ENCODE measurements at regions of chr17 and their contacts with region 1.

Region 1: DNA sequence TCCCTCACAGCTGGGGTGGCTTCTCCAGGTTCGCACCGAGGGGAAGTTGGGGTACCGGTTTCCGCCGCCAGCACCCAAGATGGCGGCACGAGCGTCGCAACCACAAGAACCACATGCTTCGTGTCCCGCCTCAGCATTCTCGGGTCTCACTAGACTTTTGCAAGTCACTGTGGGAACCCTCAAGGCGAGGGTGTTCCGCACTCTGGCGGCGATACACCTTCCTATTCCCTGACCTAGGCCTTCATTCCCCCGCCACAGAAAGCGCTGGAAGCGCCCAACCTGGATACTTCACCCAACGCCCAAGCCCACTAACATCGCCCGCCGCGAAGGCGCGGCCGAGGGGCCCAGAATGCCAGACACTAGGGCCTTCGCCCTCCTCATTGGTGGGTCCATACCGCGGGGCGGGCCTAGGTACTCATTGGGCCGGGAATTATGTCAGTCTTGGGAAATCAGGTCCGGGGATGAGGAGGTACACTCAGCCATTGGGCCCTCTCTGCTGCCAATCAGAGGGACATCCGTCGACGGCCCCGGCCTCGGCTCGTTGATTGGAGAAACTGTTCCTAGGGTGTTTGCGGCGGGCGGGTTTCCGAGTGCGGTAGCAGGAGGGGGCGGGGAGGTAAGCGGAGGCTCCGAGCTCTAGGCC is at the start of gene NFE2L1:
- DNase-seq: peak; percentile 100
- ATAC-seq: peak; percentile 91
- H3K4me3 ChIP-seq: peak within 1 kb of the TSS; percentile 64 to 67
- H3K27ac ChIP-seq: peak within 1 kb of the TSS; percentile 90
- H3K4me1 ChIP-seq: peaks cover 25 to 52% of the 10 kb centered on the region in 2 experiments
- H3K27me3 ChIP-seq: no peaks in the 10 kb centered on the region
- CTCF ChIP-seq: no peak
- POLR2A ChIP-seq: peak; percentile 71
- RAD21 ChIP-seq: no peak
- total RNA-seq, gene NFE2L1: 135 TPM

Region 2: DNA sequence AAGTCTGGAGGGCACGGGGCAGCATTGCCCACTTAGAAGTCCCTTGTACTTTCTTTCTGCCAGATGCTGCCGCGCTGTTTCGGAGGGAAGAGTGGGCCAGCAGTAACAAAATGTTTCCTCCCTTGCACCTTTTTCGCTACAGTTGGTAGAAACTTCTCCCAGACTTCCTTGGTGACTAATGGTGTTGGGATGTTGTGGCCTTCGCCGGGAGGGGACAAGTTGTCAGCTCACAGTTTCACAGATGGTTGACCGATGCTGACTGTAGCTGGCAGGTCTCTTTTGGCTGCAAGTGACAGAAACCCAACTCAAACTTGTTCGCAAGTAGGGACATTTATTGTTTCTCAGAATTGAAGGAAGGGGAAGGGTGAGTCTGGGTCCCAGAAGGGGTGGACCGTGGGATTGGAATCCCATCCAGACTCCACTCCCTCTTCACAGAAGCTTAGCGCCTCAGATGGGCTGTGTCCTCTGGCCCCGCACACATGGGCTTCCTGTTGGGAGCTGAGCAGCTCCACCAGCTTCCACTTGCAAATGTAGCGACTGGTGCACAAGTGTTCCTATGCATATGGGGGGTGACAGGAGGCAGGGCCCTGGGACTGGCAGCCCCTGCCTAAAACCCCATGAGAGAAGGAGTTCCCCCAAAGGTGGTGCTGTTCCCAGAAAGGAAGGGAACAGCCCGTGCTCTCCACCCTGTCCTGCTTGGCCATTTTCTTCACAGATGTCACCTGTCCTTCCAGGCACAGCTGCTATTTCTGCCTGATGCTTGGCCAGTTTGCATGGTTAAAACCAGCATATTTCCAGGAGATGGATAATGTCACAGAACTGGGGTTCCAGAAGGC is 1037.9 kb before region 1 on chr17:
- CTCF ChIA-PET with region 1: no interaction called
- POLR2A ChIA-PET with region 1: no interaction called
- RAD21 ChIA-PET with region 1: no interaction called
- intact Hi-C with region 1: no loop called
- DNase-seq: no peak
- ATAC-seq: no peak
- H3K4me3 ChIP-seq: no peak overlapping the region
- H3K27ac ChIP-seq: no peak overlapping the region
- H3K4me1 ChIP-seq: peaks cover 0 to 8% of the 10 kb centered on the region in 2 experiments; a peak in 2 of 4 replicates
- H3K27me3 ChIP-seq: no peaks in the 10 kb centered on the region
- CTCF ChIP-seq: no peak
- POLR2A ChIP-seq: no peak
- RAD21 ChIP-seq: no peak

Region 3: DNA sequence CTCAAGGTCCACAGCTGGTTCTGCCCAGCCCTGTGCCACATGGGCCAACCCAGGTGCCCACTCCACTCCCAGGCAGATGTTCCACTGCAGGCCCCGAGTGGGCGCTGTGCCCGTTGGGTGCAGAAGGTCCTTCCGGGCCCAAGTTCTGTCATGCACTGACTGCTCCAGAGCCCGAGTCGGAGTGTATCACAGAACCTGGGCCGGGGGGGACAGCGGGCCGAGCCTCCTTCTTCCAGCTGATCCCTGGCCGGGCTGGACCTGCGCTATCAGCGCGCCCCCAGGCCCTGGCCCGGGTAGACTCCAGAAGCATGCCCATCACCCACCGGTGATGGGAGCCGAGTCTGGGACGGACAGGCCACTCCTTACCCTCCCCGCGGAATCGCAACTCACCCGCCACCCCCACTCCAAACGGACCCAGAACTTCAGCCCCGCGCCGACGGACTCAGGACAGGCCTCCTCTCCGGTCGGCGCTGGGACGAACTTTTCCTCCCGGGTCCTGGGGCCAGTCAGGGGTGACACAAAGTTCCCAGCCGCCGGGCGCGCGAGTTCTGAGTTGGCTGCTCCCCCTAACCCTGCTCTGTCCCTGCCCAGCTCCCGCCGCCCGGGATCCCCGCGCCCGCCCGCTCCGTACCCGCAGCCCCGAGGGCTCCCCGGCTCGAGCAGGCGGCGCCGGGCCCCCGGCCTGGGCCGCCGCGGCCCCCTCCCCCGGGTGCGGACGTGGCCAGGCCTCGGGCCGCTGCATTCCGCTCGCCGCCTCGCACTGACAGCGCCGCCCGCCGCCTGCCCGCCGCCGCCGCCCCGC is 10.6 kb before region 1 on chr17 and contains the start of gene COPZ2:
- CTCF ChIA-PET with region 1: no interaction called
- POLR2A ChIA-PET with region 1: interaction called, 17 read pairs
- RAD21 ChIA-PET with region 1: no interaction called
- intact Hi-C with region 1: no loop called
- DNase-seq: no peak
- ATAC-seq: peak; percentile 25; the same call in 1 of the 2 replicates
- H3K4me3 ChIP-seq: no peak within 1 kb of the TSS
- H3K27ac ChIP-seq: no peak within 1 kb of the TSS
- H3K4me1 ChIP-seq: no peaks in the 10 kb centered on the region
- H3K27me3 ChIP-seq: no peaks in the 10 kb centered on the region
- CTCF ChIP-seq: no peak
- POLR2A ChIP-seq: no peak
- RAD21 ChIP-seq: no peak
- total RNA-seq, gene COPZ2: not detected

Region 4: GRCh38 chr17:48084932-48085444 is 37.1 kb after region 1 on chr17:
- CTCF ChIA-PET with region 1: interaction called, 10 read pairs
- POLR2A ChIA-PET with region 1: interaction called, 13 read pairs
- RAD21 ChIA-PET with region 1: no interaction called
- intact Hi-C with region 1: no loop called
- DNase-seq: no peak
- ATAC-seq: no peak
- H3K4me3 ChIP-seq: no peak overlapping the region
- H3K27ac ChIP-seq: no peak overlapping the region
- H3K4me1 ChIP-seq: peaks cover 3 to 7% of the 10 kb centered on the region in 2 experiments; a peak in 2 of 4 replicates
- H3K27me3 ChIP-seq: no peaks in the 10 kb centered on the region
- CTCF ChIP-seq: no peak
- POLR2A ChIP-seq: no peak
- RAD21 ChIP-seq: no peak

Region 5: GRCh38 chr17:48107168-48108132 is 59.6 kb after region 1 on chr17 and contains the start of gene SNX11:
- CTCF ChIA-PET with region 1: no interaction called
- POLR2A ChIA-PET with region 1: interaction called, 14 read pairs
- RAD21 ChIA-PET with region 1: no interaction called
- intact Hi-C with region 1: no loop called
- DNase-seq: peak; percentile 85
- ATAC-seq: peak; percentile 96
- H3K4me3 ChIP-seq: peak within 1 kb of the TSS; percentile 82 to 94
- H3K27ac ChIP-seq: peak within 1 kb of the TSS; percentile 93
- H3K4me1 ChIP-seq: peaks cover 0 to 15% of the 10 kb centered on the region in 2 experiments; a peak in 2 of 4 replicates
- H3K27me3 ChIP-seq: no peaks in the 10 kb centered on the region
- CTCF ChIP-seq: 0 out of 6 replicates have a peak, but pooled peaks of 2 of the 3 experiments have one; percentile 1 to 6
- POLR2A ChIP-seq: peak; percentile 67
- RAD21 ChIP-seq: no peak
- total RNA-seq, gene SNX11: 26.8 TPM

Region 6: DNA sequence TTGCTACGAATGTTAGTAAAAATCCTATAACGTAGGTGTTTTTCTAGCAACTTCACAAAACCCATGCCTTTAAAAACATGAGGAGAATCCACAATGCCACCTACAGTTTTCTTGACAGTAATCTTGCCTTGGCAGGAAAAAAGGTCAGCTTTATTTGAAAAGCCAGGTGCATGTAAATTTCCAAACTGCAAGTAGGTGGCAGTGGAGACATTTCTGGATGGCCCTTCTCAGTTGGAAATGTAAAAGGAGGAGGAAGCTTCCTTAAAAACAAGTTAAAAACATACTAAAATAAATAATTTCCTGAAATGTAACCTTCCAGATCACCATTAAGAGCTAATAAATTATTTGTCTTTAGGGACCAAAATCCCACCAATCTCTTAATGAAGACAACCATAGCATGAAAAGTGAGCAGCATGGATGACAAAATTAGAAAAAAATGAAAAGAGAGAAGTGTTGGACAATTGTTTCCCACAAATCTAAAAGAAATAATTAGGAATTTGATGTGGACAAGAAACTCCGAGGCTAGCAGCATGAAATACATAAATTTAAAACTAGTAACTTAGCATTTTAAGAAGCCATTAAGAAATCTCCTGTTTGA is 211.9 kb after region 1 on chr17:
- CTCF ChIA-PET with region 1: no interaction called
- POLR2A ChIA-PET with region 1: no interaction called
- RAD21 ChIA-PET with region 1: no interaction called
- intact Hi-C with region 1: no loop called
- DNase-seq: no peak
- ATAC-seq: peak; percentile 59
- H3K4me3 ChIP-seq: no peak overlapping the region
- H3K27ac ChIP-seq: no peak overlapping the region
- H3K4me1 ChIP-seq: peaks cover 12 to 55% of the 10 kb centered on the region in 2 experiments
- H3K27me3 ChIP-seq: no peaks in the 10 kb centered on the region
- CTCF ChIP-seq: peak; percentile 84 to 98 (median 91)
- POLR2A ChIP-seq: no peak
- RAD21 ChIP-seq: peak; percentile 94

Measured in HCT116 (cell line).